Activated B cell treated with CpG ODN at 0.5 μM for 24 hours (primary cell): ENCODE measurements at regions of chr11 and their contacts with region 1.

Region 1: GRCh38 chr11:65888163-65888814 is at the start of gene FIBP:
- DNase-seq: peak; percentile 91
- ATAC-seq: peak; percentile 63
- H3K4me3 Mint-ChIP-seq: peak within 1 kb of the TSS; percentile 98
- H3K27ac Mint-ChIP-seq: peak within 1 kb of the TSS; percentile 95
- H3K4me1 Mint-ChIP-seq: peaks cover 70% of the 10 kb centered on the region
- H3K27me3 Mint-ChIP-seq: no peaks in the 10 kb centered on the region
- CTCF ChIP-seq: peak; percentile 23
- total RNA-seq, gene FIBP: 74.5 and 76.5 TPM in 2 replicates

Region 2: GRCh38 chr11:65637794-65638317 is 250.4 kb before region 1 on chr11 and contains the start of gene SIPA1:
- CTCF ChIA-PET with region 1: no interaction called
- POLR2A ChIA-PET with region 1: interaction called, 14 read pairs
- intact Hi-C with region 1: no loop called
- DNase-seq: peak; percentile 86
- ATAC-seq: peak; percentile 35
- H3K4me3 Mint-ChIP-seq: peak within 1 kb of the TSS; percentile 94
- H3K27ac Mint-ChIP-seq: peak within 1 kb of the TSS; percentile 96
- H3K4me1 Mint-ChIP-seq: peaks cover 51% of the 10 kb centered on the region
- H3K27me3 Mint-ChIP-seq: no peaks in the 10 kb centered on the region
- CTCF ChIP-seq: no peak
- total RNA-seq, gene SIPA1: 236 and 252 TPM in 2 replicates

Region 3: DNA sequence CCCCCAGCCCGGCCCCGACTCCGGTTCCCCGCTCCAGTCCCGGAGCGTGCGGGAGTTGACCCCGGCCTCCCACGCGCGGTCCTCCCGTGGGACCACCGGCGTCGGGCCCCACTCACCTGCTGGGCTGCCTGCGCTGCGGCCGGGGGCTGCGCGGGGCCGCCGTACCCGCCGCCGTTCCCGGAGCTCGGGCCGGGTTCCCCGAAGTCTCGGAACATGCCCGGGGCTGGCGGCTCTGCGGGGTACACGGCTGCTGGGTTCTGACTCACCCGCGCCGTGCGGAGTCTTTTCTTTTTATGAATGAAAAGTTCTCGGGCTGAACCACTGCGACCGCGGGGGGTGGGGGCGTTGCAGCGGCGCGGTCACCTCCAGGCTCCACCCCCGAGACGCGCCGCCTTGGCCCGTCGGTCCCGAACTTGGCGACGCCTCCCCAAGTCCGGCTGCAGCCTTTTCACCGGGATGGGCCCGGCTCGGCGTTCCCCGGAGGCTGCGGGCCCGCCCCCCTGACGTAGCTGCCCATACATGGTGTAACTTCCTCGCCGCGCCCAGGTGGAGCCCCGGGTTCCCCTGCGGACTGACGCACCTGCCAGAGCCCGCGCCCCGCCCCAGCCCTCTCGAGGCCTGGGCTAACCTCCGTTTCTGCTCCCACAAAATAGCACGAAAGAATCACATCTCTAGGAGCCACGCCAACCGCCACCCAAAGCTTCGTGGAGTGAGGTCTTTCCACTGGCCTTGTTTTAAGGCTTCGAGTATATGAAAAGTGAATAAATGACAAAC is 12.0 kb after region 1 on chr11 and contains the start of gene FOSL1:
- CTCF ChIA-PET with region 1: interaction called, 11 read pairs
- POLR2A ChIA-PET with region 1: interaction called, 49 read pairs
- intact Hi-C with region 1: loop called (anchors 1 kb)
- DNase-seq: peak; percentile 82
- ATAC-seq: peak; percentile 90
- H3K4me3 Mint-ChIP-seq: peak within 1 kb of the TSS; percentile 72
- H3K27ac Mint-ChIP-seq: no peak within 1 kb of the TSS
- H3K4me1 Mint-ChIP-seq: peaks cover 13% of the 10 kb centered on the region
- H3K27me3 Mint-ChIP-seq: peaks cover 2% of the 10 kb centered on the region
- CTCF ChIP-seq: no peak
- total RNA-seq, gene FOSL1: 1.0 and 1.4 TPM in 2 replicates

Region 4: DNA sequence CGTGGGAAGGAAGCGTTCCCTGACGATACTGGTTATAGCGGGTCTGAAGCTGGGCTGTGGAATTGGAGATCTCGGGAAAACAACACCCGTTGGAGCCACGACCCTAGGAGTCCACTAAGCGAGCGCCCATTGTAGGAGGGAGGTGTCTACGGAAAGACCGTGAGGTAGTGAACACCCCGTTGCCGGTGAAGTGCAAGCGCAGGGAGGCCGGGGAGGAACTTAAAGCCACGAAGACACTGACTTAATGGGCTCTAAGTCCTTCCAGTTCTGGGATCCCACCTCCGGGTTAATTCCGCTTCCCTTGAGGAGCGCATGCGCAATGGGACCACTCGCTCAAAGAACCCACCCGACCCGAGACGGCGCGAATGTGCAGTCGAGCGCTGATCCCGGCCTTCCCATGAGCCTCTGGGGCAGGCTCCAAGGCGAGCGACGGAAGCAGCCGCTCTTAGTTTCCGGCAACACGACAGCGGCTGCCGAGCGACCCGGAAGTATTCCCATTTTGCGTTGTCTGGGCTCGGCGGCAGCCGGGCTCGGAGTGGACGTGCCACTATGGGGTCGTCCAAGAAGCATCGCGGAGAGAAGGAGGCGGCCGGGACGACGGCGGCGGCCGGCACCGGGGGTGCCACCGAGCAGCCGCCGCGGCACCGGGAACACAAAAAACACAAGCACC is 73.1 kb after region 1 on chr11 and contains the start of gene SART1:
- CTCF ChIA-PET with region 1: interaction called, 12 read pairs
- POLR2A ChIA-PET with region 1: interaction called, 142 read pairs
- intact Hi-C with region 1: loop called (anchors 1 kb)
- DNase-seq: peak; percentile 85
- ATAC-seq: peak; percentile 89
- H3K4me3 Mint-ChIP-seq: peak within 1 kb of the TSS; percentile 97
- H3K27ac Mint-ChIP-seq: peak within 1 kb of the TSS; percentile 95
- H3K4me1 Mint-ChIP-seq: peaks cover 50% of the 10 kb centered on the region
- H3K27me3 Mint-ChIP-seq: no peaks in the 10 kb centered on the region
- CTCF ChIP-seq: no peak
- total RNA-seq, gene SART1: 86.6 and 92.3 TPM in 2 replicates

Region 5: GRCh38 chr11:66001942-66002647 is 113.8 kb after region 1 on chr11 and contains the starts of genes BANF1 and EIF1AD:
- CTCF ChIA-PET with region 1: interaction called, 6 read pairs
- POLR2A ChIA-PET with region 1: interaction called, 24 read pairs
- intact Hi-C with region 1: no loop called
- DNase-seq: peak; percentile 86
- ATAC-seq: peak; percentile 82
- H3K4me3 Mint-ChIP-seq: peak within 1 kb of the TSS; percentile 100
- H3K27ac Mint-ChIP-seq: peak within 1 kb of the TSS; percentile 98
- H3K4me1 Mint-ChIP-seq: peaks cover 36% of the 10 kb centered on the region
- H3K27me3 Mint-ChIP-seq: no peaks in the 10 kb centered on the region
- CTCF ChIP-seq: no peak
- total RNA-seq, gene BANF1: 220 and 228 TPM in 2 replicates
- total RNA-seq, gene EIF1AD: 50.7 and 58.9 TPM in 2 replicates

Region 6: GRCh38 chr11:66157179-66157864 is 269.0 kb after region 1 on chr11:
- CTCF ChIA-PET with region 1: no interaction called
- POLR2A ChIA-PET with region 1: interaction called, 10 read pairs
- intact Hi-C with region 1: no loop called
- DNase-seq: no peak
- ATAC-seq: peak; percentile 40
- H3K4me3 Mint-ChIP-seq: no peak overlapping the region
- H3K27ac Mint-ChIP-seq: no peak overlapping the region
- H3K4me1 Mint-ChIP-seq: peaks cover 26% of the 10 kb centered on the region
- H3K27me3 Mint-ChIP-seq: no peaks in the 10 kb centered on the region
- CTCF ChIP-seq: no peak

Region 7: GRCh38 chr11:67629386-67630227 is 1741.3 kb after region 1 on chr11 and contains the start of gene NUDT8:
- CTCF ChIA-PET with region 1: no interaction called
- POLR2A ChIA-PET with region 1: no interaction called
- intact Hi-C with region 1: no loop called
- DNase-seq: peak; percentile 91
- ATAC-seq: peak; percentile 56
- H3K4me3 Mint-ChIP-seq: peak within 1 kb of the TSS; percentile 87
- H3K27ac Mint-ChIP-seq: peak within 1 kb of the TSS; percentile 88
- H3K4me1 Mint-ChIP-seq: peaks cover 13% of the 10 kb centered on the region
- H3K27me3 Mint-ChIP-seq: no peaks in the 10 kb centered on the region
- CTCF ChIP-seq: no peak
- total RNA-seq, gene NUDT8: 5.3 and 6.1 TPM in 2 replicates